ENCODE measurements at regions of chr17 and their contacts with region 1.

Region 1: DNA sequence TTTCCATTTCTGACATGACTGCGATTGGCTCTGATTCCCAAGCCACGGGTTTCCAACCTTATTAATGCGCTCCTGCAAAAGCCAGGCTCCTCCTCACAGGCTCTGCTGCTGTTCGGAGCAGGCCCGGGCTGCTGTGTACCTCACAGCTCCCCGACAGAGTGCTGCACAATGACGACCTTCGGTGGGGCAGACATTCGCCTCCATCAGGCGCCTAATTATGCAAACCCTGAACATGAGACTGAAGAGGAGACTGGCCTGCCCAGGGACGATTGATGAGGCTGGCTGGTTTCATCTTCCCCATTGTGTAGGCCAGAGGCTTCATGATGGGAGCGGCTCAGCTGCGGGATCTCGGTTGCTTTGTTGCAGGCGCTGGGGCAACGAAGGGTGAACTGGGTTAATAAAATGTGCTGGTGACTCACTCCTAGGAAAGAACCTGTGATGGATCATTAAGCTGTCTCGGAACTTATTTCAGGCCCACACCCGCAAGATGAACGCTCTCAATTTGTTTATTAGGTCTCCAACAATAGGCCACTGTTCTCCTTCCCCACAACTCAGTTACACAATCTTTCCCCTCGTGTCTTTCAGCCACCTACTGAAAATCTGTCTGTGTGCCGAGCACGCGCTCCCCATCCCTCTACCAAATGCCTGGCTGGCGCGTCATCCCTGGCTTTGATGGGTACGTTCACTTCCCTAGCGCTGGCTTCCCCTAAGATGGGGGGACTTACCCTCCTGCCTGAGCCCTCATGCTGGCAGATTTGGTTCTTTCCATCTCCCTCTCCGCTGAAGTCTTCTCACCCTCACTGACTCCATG is 27.2 kb upstream of the TOB1 start:
- DNase-seq: peak; percentile 86
- H3K4me3 Mint-ChIP-seq: peak overlapping the region; percentile 64
- H3K27ac Mint-ChIP-seq: peak overlapping the region; percentile 98
- H3K4me1 Mint-ChIP-seq: peaks cover 76% of the 10 kb centered on the region
- H3K27me3 Mint-ChIP-seq: no peaks in the 10 kb centered on the region
- CTCF ChIP-seq: no peak

Region 2: DNA sequence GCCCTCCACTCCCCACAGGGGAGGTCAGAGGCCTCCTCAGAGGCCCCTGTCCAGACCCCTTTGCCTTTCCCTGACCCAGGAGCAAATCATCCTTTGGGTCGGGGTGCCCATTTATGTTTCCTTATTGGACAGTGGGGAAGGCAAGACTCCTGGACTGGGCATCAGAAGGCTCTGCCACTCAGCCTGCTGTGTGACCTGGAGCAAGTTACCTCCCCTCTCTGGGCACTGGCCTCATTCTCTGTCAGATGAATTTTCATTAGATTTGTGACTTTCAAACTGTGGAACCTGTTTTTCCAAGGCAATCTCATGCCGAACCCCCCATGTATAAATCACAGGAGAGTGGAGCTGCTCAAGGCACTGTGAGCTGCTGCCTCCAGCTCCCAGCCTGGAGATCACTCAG is 19.7 kb after region 1 on chr17:
- CTCF ChIA-PET with region 1: interaction called, 10 read pairs
- intact Hi-C with region 1: no loop called
- DNase-seq: no peak
- H3K4me3 Mint-ChIP-seq: no peak overlapping the region
- H3K27ac Mint-ChIP-seq: no peak overlapping the region
- H3K4me1 Mint-ChIP-seq: peaks cover 47% of the 10 kb centered on the region
- H3K27me3 Mint-ChIP-seq: no peaks in the 10 kb centered on the region
- CTCF ChIP-seq: no peak

Measured in Calu3 (cell line).